ENCODE measurements at regions of chr12 and their contacts with region 1.

Region 1: DNA sequence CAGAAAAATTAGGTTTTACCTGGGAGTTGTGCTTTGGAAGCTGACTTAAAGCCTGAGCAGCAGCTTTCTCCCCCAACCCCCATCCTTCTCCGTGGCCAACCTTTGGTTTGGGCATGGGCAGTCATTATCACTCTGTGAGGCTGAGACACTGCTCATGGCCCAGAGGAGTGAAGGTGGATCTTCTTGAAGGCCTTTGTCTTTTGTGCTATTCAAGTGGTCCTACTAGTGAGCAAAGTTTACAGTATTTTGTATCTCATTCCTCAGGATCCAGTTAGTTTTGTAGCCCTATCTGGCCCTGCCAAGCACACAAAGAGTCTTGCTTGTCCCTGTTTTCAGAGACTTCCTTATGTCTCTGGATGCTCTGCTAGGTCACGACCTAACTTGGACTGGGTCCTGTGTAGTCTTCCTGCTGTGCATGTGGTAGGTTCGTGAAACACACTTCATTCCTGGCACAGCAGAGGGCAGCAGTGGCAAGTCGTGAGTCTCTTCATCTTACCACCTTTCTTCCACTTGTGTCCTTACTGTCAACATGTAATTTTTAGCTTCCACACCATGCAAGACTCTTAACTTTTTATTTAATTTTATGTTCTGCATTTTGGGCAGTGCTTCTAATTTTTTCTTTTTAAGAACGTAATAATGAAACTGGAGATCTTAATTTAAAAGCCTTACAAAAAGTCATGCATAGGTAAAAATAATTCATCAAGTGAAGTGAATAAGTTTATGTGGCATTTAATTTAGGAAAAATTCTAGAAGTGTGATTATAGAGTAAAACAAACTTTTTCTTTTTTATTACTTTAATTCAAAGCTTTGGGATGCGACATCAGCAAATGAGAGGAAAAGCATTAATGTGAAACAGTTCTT is 53.7 kb downstream of the APAF1 start:
- DNase-seq: peak; percentile 11
- H3K4me3 ChIP-seq: no peak overlapping the region
- H3K27ac ChIP-seq: no peak overlapping the region
- H3K27me3 ChIP-seq: no peaks in the 10 kb centered on the region
- CTCF ChIP-seq: peak; percentile 76

Region 2: DNA sequence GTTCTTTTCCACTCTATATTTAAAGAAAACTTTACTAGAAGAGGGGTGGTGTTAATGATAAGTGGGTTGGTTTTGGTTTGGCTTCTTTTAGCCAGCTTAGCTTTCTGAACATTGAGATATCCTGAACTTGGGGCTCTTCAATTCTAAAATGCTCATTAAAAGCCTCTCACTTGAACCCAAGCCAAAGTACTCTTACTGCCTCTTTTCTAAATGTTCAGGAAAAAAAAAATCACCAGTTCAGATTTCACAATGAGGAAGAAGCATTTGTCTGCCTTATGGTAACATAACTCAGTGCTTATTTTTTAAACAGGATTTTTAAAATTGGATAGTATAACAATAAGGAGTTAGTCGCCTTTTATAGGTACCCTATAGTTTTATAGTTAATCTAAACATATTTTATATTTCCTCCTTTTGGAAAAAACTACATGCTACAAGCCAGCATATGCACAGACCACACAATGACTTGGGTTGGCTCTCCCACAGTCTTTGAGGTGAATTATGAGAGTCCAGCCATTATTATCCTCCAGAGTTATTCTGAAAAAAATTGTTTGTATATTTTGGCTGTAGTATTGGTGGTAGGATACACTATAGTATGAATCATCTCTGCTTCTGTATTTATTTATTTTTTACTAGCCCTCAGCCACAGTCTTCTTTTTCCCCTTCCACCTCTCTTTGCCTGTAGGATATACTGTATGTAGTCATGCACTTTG is 379.0 kb before region 1 on chr12:
- CTCF ChIA-PET with region 1: no interaction called
- POLR2A ChIA-PET with region 1: no interaction called
- DNase-seq: no peak
- H3K4me3 ChIP-seq: no peak overlapping the region
- H3K27ac ChIP-seq: no peak overlapping the region
- H3K27me3 ChIP-seq: peaks cover 3% of the 10 kb centered on the region
- CTCF ChIP-seq: no peak

Region 3: DNA sequence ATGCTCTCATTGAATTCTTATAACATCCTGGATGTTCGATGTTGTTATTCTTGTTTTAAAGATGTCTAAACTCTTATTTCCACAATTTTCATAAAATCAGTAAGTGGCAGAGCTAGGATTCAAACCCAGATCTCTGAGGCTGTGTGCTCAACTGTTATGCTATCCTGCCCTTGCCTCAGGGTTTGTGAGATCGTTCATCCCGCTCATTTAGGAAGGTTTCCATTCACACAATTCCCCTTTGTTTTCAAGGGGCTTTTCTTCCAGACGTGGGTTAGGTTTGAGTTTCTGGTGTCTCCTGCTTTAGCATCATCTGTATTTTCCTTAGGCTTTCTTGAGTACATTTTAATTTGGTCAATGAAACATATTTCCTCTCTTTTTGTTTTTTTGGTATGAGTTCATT is 15.6 kb after region 1 on chr12:
- CTCF ChIA-PET with region 1: interaction called, 13 read pairs
- POLR2A ChIA-PET with region 1: no interaction called
- DNase-seq: no peak
- H3K4me3 ChIP-seq: no peak overlapping the region
- H3K27ac ChIP-seq: no peak overlapping the region
- H3K27me3 ChIP-seq: no peaks in the 10 kb centered on the region
- CTCF ChIP-seq: no peak

Region 4: DNA sequence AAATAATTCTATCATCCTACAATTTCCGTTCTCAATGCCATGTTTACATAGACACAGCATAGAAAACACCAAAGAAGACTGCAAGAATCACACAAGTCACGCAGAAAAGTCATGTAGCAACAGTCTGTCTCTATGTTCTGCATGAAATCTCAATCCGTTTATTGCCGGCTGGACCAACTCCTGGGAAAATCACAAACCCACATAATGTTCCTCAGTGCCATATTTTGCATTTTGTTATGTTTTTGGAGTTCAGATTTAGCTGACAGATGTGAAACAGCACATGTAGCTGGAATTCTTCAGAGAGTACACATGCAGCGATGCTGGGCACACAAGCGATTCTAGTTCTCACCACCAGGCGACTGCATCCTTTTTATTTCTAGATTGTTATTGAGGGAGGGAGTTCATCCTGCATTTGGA is 139.4 kb after region 1 on chr12:
- CTCF ChIA-PET with region 1: no interaction called
- POLR2A ChIA-PET with region 1: no interaction called
- DNase-seq: no peak
- H3K4me3 ChIP-seq: no peak overlapping the region
- H3K27ac ChIP-seq: no peak overlapping the region
- H3K27me3 ChIP-seq: peaks cover 2% of the 10 kb centered on the region
- CTCF ChIP-seq: peak; percentile 53

Measured in AG04450 (cell line).